ENCODE measurements at regions of chr16 and their contacts with region 1.

Region 1: GRCh38 chr16:46673320-46674013 is 15.5 kb downstream of the VPS35 start:
- DNase-seq: peak; percentile 82

Region 2: DNA sequence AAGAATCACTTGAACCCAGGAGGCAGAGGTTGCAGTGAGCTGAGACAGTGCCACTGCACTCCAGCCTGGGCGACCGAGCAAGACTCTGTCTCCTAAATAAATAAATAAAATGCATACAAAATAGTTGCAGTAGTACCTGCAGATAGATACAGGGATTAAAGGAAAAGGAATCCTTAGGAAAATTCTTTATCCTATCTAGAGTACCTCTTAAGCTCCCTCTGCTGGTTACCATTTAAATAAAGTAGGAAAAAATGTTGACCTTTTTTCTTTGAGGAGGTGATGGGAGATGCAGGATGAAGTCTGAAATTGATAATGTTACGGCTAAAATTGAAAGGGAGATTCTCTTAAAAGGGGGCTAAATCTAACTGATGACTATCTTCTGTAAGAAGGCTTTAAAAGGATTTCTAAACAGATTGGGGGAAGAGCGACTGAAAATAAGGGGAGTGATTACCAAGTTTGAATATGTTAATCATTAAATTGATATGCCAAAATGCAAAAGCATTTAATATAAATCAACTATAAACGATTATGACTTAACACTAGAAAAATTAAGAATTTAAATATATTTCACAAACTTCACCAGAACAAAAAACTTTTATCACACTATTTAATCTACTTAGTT is 128.1 kb after region 1 on chr16:
- CTCF ChIA-PET with region 1: interaction called, 16 read pairs
- POLR2A ChIA-PET with region 1: interaction called, 3 read pairs
- DNase-seq: peak; percentile 22